ENCODE measurements at regions of chr14 and their contacts with region 1.

Region 1: GRCh38 chr14:34461334-34462131 is 507 bp downstream of the SPTSSA start:
- DNase-seq: peak; percentile 55 to 70
- ATAC-seq: peak; percentile 54 to 69 (median 60)
- H3K4me3 ChIP-seq: peak overlapping the region; percentile 80
- H3K27ac ChIP-seq: peak overlapping the region; percentile 93
- H3K4me1 ChIP-seq: peaks cover 18% of the 10 kb centered on the region
- H3K27me3 ChIP-seq: no peaks in the 10 kb centered on the region
- CTCF ChIP-seq: no peak

Region 2: GRCh38 chr14:34539407-34540180 is 78.1 kb after region 1 on chr14 and contains the start of gene EAPP:
- intact Hi-C with region 1: loop called (anchors 5 kb)
- DNase-seq: peak; percentile 98 to 99
- ATAC-seq: peak; percentile 99
- H3K4me3 ChIP-seq: peak within 1 kb of the TSS; percentile 84
- H3K27ac ChIP-seq: peak within 1 kb of the TSS; percentile 97
- H3K4me1 ChIP-seq: peaks cover 23% of the 10 kb centered on the region
- H3K27me3 ChIP-seq: no peaks in the 10 kb centered on the region
- CTCF ChIP-seq: no peak
- total RNA-seq, gene EAPP: 19.9 to 28.2 (median 24.0) TPM